Heart left ventricle (tissue), 16 donors: ENCODE measurements at regions of chr10 and their contacts with region 1.

Region 1: DNA sequence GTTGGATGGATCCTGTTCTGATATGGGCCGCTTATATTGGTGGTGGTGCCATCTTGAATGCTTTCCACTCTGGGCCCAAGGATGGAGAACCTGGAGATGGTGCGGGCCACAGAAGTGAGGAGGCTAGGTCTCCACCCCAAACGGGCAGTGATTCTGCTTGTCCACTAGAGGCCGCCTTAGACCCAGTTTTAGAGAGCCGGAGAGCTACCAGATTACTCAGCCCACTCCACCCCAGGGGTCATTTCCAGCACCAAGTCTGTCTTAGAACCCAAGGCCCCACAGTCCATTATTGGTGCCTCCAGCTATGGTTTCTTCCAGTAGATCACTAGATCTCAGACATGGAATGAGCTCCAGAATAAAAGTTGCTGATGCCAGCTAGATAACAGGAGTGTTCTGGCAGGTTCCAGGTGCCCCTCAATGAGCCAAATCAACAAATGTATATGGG is 11.8 kb upstream of the CAMK2G start:
- DNase-seq: peak; percentile 74 to 86 (median 82)
- ATAC-seq: peak; percentile 74 to 85 (median 84)
- H3K4me3 ChIP-seq: no peak overlapping the region
- H3K27ac ChIP-seq: peak overlapping the region in 11 of 12 donors; percentile 79 to 91 (median 86)
- H3K4me1 ChIP-seq: peaks cover 20 to 35% (median 31%) of the 10 kb centered on the region in 12 donors
- H3K27me3 ChIP-seq: no peaks in the 10 kb centered on the region
- CTCF ChIP-seq: peak; percentile 69 to 92 (median 88)
- POLR2A ChIP-seq: no peak

Region 2: GRCh38 chr10:73908853-73909538 is 22.9 kb after region 1 on chr10:
- intact Hi-C with region 1: loop called in 1 of 10 experiments (anchors 2 kb)
- DNase-seq: peak in 4 of 5 donors; percentile 56 to 70 (median 65)
- ATAC-seq: peak in 3 of 4 donors; percentile 32 to 66 (median 45)
- H3K4me3 ChIP-seq: peak overlapping the region in 3 of 12 donors; percentile 11 to 18 (median 13)
- H3K27ac ChIP-seq: peak overlapping the region in 11 of 12 donors; percentile 19 to 96 (median 72)
- H3K4me1 ChIP-seq: peaks cover 0 to 82% (median 53%) of the 10 kb centered on the region in 12 donors
- H3K27me3 ChIP-seq: no peaks in the 10 kb centered on the region
- CTCF ChIP-seq: no peak
- POLR2A ChIP-seq: no peak

Region 3: DNA sequence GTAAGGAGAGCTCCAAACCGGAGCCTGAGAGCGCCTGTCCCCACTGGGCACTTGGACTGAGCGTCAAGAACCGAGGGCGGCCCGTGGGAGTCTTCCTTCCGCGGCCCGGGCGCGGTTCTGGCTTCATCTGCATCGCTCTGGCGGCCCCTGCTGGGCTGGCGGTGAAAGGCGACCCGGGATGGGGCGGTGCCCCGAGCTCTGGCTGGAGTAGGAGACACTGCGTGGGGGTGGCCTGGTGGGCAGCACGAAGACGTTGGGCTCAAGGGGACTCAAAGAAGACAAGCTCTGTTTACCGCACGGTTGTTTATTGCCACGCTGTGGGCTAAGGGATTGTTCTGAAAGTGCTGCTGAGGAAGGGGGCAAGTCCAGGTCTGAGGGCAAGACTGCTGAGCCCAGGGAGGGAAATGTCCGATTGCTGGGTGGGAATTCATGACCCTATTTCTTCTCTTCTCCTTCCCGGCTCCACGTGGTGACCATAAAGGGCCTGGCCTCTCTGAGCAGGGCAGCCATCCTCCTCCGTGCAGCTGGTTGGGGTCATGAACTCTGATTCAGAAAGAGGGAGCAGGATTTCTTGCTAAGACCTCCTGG is 54.6 kb after region 1 on chr10:
- intact Hi-C with region 1: loop called (anchors 1 to 2 kb)
- DNase-seq: peak; percentile 89 to 96 (median 90)
- ATAC-seq: peak; percentile 90 to 96 (median 94)
- H3K4me3 ChIP-seq: peak overlapping the region in 7 of 12 donors; percentile 3 to 31 (median 18)
- H3K27ac ChIP-seq: peak overlapping the region in 11 of 12 donors; percentile 38 to 84 (median 72)
- H3K4me1 ChIP-seq: peaks cover 0 to 50% (median 30%) of the 10 kb centered on the region in 12 donors
- H3K27me3 ChIP-seq: no peaks in the 10 kb centered on the region
- CTCF ChIP-seq: peak; percentile 88 to 99 (median 94)
- POLR2A ChIP-seq: peak in 1 of 2 donors; percentile 29

Region 4: DNA sequence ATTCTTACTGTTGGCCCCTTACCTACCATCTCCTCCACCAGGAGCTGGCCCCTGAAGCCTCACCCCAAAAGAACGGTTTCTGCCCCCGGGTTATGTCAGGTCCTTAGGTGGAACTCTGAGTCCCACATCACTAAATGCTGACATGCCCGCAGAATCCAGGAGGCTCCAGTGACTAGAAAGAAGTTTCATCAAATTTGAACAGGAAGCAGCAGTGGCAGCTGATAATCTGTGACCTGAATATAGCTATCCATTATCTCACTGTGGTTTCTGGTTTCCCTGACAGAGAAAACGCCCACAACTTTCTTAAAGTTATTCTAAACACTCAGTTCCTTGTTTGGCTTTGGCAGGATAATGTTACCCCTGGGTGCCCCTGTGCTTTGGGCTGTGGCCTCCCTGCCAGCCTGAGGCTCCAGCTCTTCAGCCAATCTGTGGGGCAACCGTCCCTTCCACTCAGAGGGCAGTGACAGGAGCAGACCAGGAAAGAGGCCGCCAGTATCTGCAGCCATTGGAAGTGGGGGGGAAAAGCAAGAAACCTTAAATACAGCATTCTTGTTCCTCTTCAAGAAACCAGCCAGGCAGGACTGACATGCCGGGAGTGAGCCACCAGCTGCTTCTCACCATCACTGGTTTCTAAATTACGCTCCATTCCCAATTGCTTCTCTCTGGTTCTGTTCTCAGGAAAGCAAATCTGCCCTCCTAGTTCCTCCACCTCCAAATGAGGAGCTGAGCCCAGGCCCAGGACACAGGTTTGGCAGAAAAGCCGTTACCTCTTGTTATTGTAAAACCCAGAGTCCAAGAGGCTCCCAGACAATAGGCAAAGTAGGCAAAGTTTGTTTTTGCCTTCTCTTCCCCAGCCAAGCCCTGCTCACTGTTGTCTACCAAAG is 70.6 kb after region 1 on chr10:
- intact Hi-C with region 1: loop called in 1 of 10 experiments (anchors 5 kb)
- DNase-seq: peak in 1 of 5 donors; percentile 37
- ATAC-seq: peak; percentile 37 to 67 (median 58)
- H3K4me3 ChIP-seq: peak overlapping the region in 1 of 12 donors; percentile 10
- H3K27ac ChIP-seq: peak overlapping the region in 11 of 12 donors; percentile 10 to 83 (median 63)
- H3K4me1 ChIP-seq: peaks cover 0 to 43% (median 13%) of the 10 kb centered on the region in 12 donors
- H3K27me3 ChIP-seq: no peaks in the 10 kb centered on the region
- CTCF ChIP-seq: no peak
- POLR2A ChIP-seq: no peak

Region 5: DNA sequence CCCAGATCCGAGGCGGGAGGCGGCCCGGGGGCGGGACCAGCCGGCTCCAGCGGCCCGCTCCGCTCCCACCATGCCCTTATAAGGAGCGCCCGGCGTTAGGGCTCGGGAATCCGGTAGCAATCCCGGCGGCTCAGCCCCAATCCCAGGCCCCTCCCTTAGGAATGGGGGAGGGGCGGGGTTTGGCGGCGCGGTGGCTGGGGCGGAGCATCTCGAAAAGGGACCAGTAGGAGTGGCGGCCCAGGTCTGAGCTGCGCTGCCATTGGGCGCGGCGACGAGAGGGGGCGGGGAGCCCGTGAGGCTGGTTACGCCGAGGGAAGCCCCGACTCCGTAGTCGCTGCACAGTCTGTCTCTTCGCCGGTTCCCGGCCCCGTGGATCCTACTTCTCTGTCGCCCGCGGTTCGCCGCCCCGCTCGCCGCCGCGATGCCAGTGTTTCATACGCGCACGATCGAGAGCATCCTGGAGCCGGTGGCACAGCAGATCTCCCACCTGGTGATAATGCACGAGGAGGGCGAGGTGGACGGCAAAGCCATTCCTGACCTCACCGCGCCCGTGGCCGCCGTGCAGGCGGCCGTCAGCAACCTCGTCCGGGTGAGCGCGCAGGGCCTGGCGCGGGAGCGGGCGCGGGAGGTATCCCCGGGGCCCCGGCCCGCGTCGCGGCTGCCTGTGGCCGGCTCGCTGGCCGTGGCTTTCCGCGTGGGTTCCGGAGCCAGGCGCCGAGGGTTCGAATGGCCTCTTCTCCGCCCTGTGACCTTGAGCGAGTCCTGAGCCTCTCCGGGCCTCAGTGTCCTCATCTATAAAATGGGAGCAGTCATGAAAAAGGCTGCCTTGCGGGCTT is 111.9 kb after region 1 on chr10 and contains the start of gene VCL:
- intact Hi-C with region 1: loop called in 1 of 10 experiments (anchors 5 kb)
- DNase-seq: peak; percentile 98 to 99 (median 98)
- ATAC-seq: peak; percentile 96 to 97 (median 97)
- H3K4me3 ChIP-seq: peak within 1 kb of the TSS; percentile 77 to 98 (median 94)
- H3K27ac ChIP-seq: peak within 1 kb of the TSS; percentile 78 to 99 (median 93)
- H3K4me1 ChIP-seq: peaks cover 0 to 42% (median 26%) of the 10 kb centered on the region in 12 donors
- H3K27me3 ChIP-seq: no peaks in the 10 kb centered on the region
- CTCF ChIP-seq: no peak
- POLR2A ChIP-seq: peak; percentile 84 to 99
- total RNA-seq, gene VCL: 215 to 543 (median 273) TPM

Region 6: DNA sequence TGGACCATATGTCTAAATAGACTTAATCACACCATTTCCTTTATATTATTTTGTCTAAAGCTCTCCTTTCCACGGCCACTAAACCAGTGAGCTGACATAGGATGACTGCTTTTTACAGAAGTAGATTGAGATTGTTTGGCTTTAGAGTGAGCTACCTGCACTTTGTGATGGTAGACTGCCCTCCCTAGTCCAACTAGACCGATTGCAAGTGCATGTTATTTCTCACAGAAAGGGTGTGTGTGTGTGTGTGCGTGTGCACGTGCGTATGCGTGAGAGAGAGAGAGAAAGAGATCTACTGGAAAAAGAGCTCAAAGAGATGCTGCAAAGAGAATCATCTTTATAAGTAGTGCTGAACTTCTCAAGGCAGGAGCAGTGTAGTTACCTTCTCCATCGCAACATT is 172.6 kb after region 1 on chr10:
- intact Hi-C with region 1: loop called in 1 of 10 experiments (anchors 5 kb)
- DNase-seq: no peak
- ATAC-seq: peak in 2 of 4 donors; percentile 28 to 58
- H3K4me3 ChIP-seq: no peak overlapping the region
- H3K27ac ChIP-seq: peak overlapping the region in 10 of 12 donors; percentile 15 to 86 (median 68)
- H3K4me1 ChIP-seq: peaks cover 3 to 72% (median 39%) of the 10 kb centered on the region in 12 donors
- H3K27me3 ChIP-seq: no peaks in the 10 kb centered on the region
- CTCF ChIP-seq: peak in 5 of 12 donors; percentile 13 to 41 (median 26)
- POLR2A ChIP-seq: no peak

Region 7: GRCh38 chr10:74234569-74234968 is 348.5 kb after region 1 on chr10:
- intact Hi-C with region 1: loop called in 5 of 10 experiments (anchors 5 to 10 kb)
- DNase-seq: no peak
- ATAC-seq: no peak
- H3K4me3 ChIP-seq: no peak overlapping the region
- H3K27ac ChIP-seq: no peak overlapping the region
- H3K4me1 ChIP-seq: peaks cover 0 to 9% (median 0%) of the 10 kb centered on the region in 12 donors
- H3K27me3 ChIP-seq: no peaks in the 10 kb centered on the region
- CTCF ChIP-seq: peak in 10 of 12 donors; percentile 12 to 56 (median 44)
- POLR2A ChIP-seq: no peak

Region 8: DNA sequence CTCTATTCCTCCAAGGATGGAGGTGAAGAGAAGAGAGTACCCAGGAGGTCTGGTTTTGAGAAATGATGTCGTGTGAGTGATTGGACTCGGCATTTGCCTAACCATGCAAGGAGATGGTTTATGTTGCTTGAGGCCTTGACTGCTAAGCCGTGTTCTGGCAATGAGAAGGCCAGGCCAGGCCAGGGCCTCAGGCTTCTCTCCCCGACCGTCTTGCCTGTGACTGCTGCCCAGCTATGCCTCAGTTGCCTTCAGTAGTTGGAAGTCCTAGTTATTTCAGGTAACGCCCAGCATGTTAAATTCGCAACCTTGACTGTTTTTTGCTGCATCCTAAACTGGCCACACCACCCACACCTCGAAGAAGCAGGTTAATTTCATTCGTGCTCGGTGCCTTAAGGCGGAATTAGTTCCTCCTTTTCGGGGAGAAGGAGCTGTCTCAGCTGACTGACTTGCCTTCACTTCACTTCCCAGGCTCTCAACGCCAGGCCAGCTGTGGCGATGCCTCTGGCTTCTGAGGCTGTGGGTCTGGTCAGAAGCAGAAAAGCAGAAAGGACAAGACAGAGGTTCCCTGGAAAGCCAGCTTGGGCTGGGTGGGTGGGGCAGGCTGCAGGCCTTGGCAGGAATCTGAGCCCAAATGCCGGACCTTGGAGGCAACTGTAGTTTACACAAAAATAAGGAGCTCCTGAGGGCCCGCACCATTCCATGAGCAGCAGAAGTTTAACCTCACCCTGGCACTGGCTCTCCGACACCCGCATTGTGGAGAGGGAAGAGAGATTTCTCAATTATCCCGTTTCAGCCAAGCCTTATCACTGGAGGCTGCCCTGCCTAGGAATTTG is 1163.4 kb after region 1 on chr10:
- intact Hi-C with region 1: no loop called
- DNase-seq: no peak
- ATAC-seq: peak in 2 of 4 donors; percentile 33 to 45
- H3K4me3 ChIP-seq: no peak overlapping the region
- H3K27ac ChIP-seq: no peak overlapping the region
- H3K4me1 ChIP-seq: peaks cover 0 to 18% (median 5%) of the 10 kb centered on the region in 12 donors
- H3K27me3 ChIP-seq: no peaks in the 10 kb centered on the region
- CTCF ChIP-seq: no peak
- POLR2A ChIP-seq: no peak